ENCODE measurements at regions of chr1 and their contacts with region 1.

Region 1: DNA sequence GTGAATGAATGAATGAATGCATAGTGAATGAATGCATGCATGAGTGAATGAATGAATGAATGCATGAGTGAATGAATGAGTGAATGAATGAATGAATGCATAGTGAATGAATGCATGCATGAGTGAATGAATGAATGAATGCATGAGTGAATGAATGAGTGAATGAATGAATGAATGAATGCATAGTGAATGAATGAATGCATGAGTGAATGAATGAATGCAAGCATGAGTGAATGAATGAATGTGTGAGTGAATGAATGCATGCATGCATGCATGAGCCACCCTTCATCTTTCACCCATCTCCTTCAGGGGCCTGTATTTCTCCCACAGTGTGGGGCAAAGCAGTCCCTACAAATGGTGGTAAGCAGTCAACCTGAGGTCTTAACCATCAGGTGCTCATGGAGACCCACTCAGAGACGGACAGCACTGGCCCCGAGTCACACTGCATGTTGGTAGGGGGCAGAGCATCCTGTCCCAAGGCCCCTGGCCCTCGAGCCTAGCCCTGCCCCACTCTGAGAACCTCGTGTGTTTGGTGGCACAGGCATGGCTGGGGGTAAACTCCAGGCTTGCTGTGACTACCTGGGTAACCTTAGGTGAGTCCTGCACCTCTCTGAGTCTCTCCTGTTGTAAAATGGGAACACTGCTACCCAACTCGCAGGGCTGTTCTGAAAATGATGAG is 28.0 kb upstream of the PAX7 start:
- DNase-seq: no peak
- H3K4me3 ChIP-seq: no peak overlapping the region
- H3K27ac ChIP-seq: no peak overlapping the region
- H3K4me1 ChIP-seq: no peaks in the 10 kb centered on the region
- H3K27me3 ChIP-seq: no peaks in the 10 kb centered on the region
- CTCF ChIP-seq: no peak
- POLR2A ChIP-seq: no peak

Region 2: DNA sequence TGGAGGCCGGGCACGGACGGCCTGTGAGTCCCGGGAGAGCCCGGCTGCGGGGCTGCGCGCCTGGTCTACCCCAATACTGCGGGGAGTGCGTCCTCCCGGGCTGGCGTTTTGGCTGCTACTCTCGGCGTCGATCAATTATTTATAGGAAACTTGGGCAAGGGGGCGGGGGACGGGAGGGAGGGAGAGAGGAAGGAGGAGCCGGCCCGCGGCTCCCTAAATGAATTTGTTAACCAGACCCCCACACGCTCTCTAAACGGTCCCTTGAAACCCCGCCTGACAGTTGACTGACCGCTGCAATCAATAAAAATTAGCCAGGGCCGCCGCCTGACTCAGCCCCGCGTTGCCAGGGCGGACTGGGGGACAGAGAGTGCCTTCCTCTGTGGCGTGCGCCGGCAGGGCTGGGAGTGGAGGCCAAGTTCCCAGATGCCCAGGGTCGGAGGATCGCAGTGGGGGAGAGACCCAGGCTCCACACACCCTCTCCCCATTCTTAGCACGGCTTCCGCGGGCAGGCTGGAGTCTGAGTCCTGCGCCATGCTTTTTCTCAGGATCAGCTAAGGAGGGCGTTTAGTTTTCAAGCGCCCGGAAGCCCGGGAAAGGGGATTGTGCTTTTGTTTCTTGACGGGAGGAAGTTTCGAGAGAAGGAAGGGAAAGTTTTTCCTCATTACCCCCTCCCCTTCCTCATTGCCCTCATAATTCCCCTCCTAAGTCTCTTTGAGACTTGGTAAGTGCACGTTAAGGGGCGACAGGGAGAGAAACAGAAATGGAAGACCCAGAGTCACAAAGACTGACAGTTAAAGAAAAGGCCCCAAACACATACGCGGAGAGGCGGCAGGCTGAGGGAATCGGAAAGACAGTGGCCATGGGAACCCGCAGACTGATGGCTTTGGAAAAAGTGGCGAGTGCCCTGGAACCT is 34.2 kb after region 1 on chr1:
- intact Hi-C with region 1: loop called (anchors 1 kb)
- DNase-seq: no peak
- H3K4me3 ChIP-seq: no peak overlapping the region
- H3K27ac ChIP-seq: no peak overlapping the region
- H3K4me1 ChIP-seq: no peaks in the 10 kb centered on the region
- H3K27me3 ChIP-seq: peaks cover 7 to 100% of the 10 kb centered on the region in 2 donors
- CTCF ChIP-seq: no peak
- POLR2A ChIP-seq: no peak

Region 3: GRCh38 chr1:18649693-18650370 is 47.2 kb after region 1 on chr1:
- intact Hi-C with region 1: no loop called
- DNase-seq: no peak
- H3K4me3 ChIP-seq: no peak overlapping the region
- H3K27ac ChIP-seq: no peak overlapping the region
- H3K4me1 ChIP-seq: peaks cover 0 to 11% of the 10 kb centered on the region in 2 donors
- H3K27me3 ChIP-seq: peaks cover 2 to 96% of the 10 kb centered on the region in 2 donors
- CTCF ChIP-seq: no peak
- POLR2A ChIP-seq: no peak

Region 4: DNA sequence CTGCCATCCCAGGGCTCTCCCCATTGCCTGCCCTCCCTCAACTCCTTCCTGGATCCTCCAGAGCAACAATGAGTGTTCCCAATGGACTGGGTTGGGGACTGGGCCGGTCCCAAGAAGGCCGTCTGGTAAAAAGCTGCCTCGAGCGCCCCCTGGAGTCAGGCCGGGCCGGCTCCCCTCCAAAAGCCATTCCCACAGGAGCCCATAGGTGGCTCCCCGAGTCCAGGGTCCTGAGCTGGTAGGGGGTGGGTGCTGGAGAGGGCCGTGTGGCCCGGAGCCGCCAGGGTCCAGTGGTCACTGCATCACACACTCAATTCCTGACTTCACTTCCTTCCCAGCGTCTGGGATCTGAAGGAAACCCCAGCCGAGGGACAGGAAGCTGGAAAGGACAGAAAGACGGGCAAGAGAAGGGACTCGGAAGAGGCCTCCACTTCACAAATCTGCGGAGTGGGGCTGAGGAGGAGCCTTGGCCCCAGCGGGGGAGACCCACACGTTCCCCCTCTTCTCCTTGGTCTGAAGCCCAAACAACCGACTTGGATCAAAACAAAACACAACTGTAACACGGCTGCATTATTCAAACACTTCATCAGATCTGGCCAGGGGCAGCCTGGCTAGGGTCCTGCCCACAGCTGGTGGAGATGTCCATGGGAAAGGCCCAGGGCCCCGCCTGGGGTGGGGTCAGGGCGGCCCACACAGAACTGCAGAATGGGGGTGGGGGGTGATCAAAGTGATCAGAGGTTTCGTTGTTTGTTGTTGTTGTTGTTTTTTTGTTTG is 310.6 kb after region 1 on chr1:
- intact Hi-C with region 1: no loop called
- DNase-seq: peak; percentile 69 to 85
- H3K4me3 ChIP-seq: peak overlapping the region in 1 of 3 donors; percentile 10
- H3K27ac ChIP-seq: peak overlapping the region; percentile 33 to 45
- H3K4me1 ChIP-seq: peaks cover 0 to 5% of the 10 kb centered on the region in 2 donors
- H3K27me3 ChIP-seq: no peaks in the 10 kb centered on the region
- CTCF ChIP-seq: peak; percentile 92 to 96 (median 93)
- POLR2A ChIP-seq: no peak